ENCODE measurements at regions of chr2 and their contacts with region 1.

Region 1: DNA sequence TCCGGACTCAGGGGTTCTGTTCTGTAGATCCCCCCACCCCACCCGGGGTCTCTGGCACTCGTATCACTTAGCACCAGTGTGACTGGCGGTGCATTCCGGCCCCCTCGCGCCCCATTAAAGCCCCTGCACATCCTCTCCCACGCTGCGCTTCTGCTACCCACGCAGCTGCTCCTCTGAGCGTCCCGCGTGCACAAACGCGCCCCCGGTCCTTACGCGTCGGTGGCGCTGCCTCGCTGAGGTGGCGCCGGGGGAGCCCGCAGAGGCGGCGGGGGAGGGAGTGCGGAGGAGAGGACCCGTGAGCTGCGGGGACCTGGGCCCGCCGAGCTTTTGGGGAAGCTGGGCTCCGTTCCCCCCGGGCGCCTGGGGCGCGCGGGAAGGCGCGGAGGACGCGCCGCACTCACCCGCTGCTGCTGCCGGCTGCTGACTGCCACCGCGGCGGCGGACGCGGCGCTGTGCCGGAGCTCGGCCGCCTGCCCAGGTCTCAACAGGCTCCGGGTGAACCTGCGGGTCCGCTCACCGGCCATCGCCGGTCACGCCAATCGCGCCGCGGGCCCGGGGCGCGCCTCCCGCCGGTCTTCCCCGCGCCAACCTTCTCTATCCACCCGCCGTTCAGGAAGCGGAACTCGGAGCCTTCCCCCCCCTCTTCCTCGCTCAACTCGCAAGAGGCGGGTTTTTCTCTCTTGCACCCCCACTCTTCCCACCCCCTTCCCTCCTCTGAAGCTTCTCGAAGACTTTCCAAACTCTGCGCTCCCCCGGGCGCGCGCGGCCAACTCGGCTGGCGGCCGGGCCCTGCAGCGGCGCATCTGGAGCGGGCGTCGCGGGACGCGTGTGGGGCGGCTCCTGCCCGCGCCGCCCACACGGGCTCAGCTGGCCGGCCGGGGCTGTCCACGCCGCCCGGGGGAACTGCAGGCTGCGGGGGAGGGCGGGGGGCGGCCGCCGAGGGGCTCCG is at the start of gene DOCK10:
- DNase-seq: peak; percentile 35 to 83 (median 54)
- ATAC-seq: peak; percentile 66
- H3K4me3 ChIP-seq: peak within 1 kb of the TSS; percentile 94
- H3K4me3 Mint-ChIP-seq: peak within 1 kb of the TSS; percentile 100
- H3K27ac ChIP-seq: peak within 1 kb of the TSS; percentile 87
- H3K27ac Mint-ChIP-seq: peak within 1 kb of the TSS; percentile 94
- H3K4me1 ChIP-seq: peaks cover 23% of the 10 kb centered on the region
- H3K4me1 Mint-ChIP-seq: peaks cover 60% of the 10 kb centered on the region
- H3K27me3 ChIP-seq: no peaks in the 10 kb centered on the region
- H3K27me3 Mint-ChIP-seq: no peaks in the 10 kb centered on the region
- CTCF ChIP-seq: no peak
- total RNA-seq, gene DOCK10: 184 to 209 TPM

Region 2: GRCh38 chr2:224778474-224778877 is 263.6 kb before region 1 on chr2:
- CTCF ChIA-PET with region 1: no interaction called
- POLR2A ChIA-PET with region 1: no interaction called
- intact Hi-C with region 1: no loop called
- DNase-seq: peak; percentile 23 to 75 (median 50)
- ATAC-seq: peak; percentile 78
- H3K4me3 ChIP-seq: no peak overlapping the region
- H3K4me3 Mint-ChIP-seq: no peak overlapping the region
- H3K27ac ChIP-seq: no peak overlapping the region
- H3K27ac Mint-ChIP-seq: peak overlapping the region; percentile 59
- H3K4me1 ChIP-seq: no peaks in the 10 kb centered on the region
- H3K4me1 Mint-ChIP-seq: peaks cover 8% of the 10 kb centered on the region
- H3K27me3 ChIP-seq: no peaks in the 10 kb centered on the region
- H3K27me3 Mint-ChIP-seq: no peaks in the 10 kb centered on the region
- CTCF ChIP-seq: peak; percentile 97

Region 3: GRCh38 chr2:224946895-224947294 is 95.2 kb before region 1 on chr2:
- CTCF ChIA-PET with region 1: no interaction called
- POLR2A ChIA-PET with region 1: interaction called, 10 read pairs
- intact Hi-C with region 1: no loop called
- DNase-seq: peak in 3 of 14 experiments; percentile 77 to 86 (median 80)
- ATAC-seq: peak; percentile 84
- H3K4me3 ChIP-seq: peak overlapping the region; percentile 52
- H3K4me3 Mint-ChIP-seq: peak overlapping the region; percentile 90
- H3K27ac ChIP-seq: peak overlapping the region; percentile 73 to 86
- H3K27ac Mint-ChIP-seq: peak overlapping the region; percentile 89
- H3K4me1 ChIP-seq: peaks cover 38% of the 10 kb centered on the region
- H3K4me1 Mint-ChIP-seq: peaks cover 81% of the 10 kb centered on the region
- H3K27me3 ChIP-seq: no peaks in the 10 kb centered on the region
- H3K27me3 Mint-ChIP-seq: no peaks in the 10 kb centered on the region
- CTCF ChIP-seq: no peak

Region 4: DNA sequence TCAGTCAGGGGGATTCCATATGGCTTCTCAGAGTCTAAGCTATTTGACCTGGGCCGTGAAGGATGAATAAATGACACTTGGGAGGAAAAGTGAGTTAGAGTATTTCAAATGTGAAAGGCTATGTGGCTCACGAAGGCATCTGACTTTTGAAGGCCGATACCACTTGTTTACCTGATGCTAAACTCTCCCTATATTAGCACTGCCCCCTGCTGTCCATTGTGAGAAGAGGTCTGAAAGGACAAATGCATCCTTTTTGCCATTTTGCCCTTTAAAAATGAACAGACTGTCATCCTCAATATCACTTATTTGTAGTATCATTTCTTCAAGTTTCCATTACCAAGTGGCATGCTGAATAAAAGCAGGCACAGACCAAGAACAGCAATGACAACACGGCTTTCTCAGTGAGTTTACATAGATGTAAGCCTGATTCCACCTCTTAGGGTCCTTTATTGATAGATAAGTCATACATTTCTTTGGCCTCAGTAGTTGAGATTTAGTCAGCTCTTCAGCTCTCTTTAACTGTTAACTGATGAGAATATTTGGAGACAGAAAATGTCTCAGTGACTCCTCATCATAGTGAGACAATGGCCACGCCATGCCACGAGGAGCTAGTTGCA is 40.0 kb before region 1 on chr2:
- CTCF ChIA-PET with region 1: interaction called, 11 read pairs
- POLR2A ChIA-PET with region 1: interaction called, 3 read pairs
- intact Hi-C with region 1: loop called (anchors 5 kb)
- DNase-seq: peak; percentile 24 to 88 (median 52)
- ATAC-seq: peak; percentile 88
- H3K4me3 ChIP-seq: no peak overlapping the region
- H3K4me3 Mint-ChIP-seq: no peak overlapping the region
- H3K27ac ChIP-seq: no peak overlapping the region
- H3K27ac Mint-ChIP-seq: peak overlapping the region; percentile 83
- H3K4me1 ChIP-seq: peaks cover 44% of the 10 kb centered on the region
- H3K4me1 Mint-ChIP-seq: peaks cover 87% of the 10 kb centered on the region
- H3K27me3 ChIP-seq: no peaks in the 10 kb centered on the region
- H3K27me3 Mint-ChIP-seq: no peaks in the 10 kb centered on the region
- CTCF ChIP-seq: peak; percentile 74

Region 5: DNA sequence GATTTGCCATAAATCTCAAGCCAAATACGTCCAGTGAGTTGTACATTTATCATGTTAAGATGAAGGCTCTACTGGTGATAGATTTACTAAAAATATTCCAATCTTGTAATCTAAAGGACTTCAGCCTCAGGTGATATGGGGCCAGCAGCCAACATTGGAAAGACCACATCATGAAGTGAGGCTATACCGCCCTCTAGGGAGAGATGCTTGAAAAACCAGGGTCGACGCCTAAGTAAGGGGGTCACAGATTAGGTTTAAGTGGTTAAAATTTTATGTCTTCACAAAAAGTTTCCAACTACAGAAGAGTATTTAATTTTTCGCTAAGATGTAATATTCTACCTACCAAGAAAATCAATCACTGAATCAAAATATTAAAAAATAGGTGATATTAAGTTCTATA is 33.2 kb before region 1 on chr2:
- CTCF ChIA-PET with region 1: interaction called, 5 read pairs
- POLR2A ChIA-PET with region 1: interaction called, 3 read pairs
- intact Hi-C with region 1: loop called (anchors 5 kb)
- DNase-seq: peak in 2 of 14 experiments; percentile 54
- ATAC-seq: peak; percentile 57
- H3K4me3 ChIP-seq: no peak overlapping the region
- H3K4me3 Mint-ChIP-seq: peak overlapping the region; percentile 26
- H3K27ac ChIP-seq: no peak overlapping the region
- H3K27ac Mint-ChIP-seq: peak overlapping the region; percentile 83
- H3K4me1 ChIP-seq: peaks cover 29% of the 10 kb centered on the region
- H3K4me1 Mint-ChIP-seq: peaks cover 97% of the 10 kb centered on the region
- H3K27me3 ChIP-seq: no peaks in the 10 kb centered on the region
- H3K27me3 Mint-ChIP-seq: no peaks in the 10 kb centered on the region
- CTCF ChIP-seq: peak; percentile 57

Region 6: GRCh38 chr2:225052703-225053102 is 10.6 kb after region 1 on chr2:
- CTCF ChIA-PET with region 1: interaction called, 7 read pairs
- POLR2A ChIA-PET with region 1: interaction called, 96 read pairs
- intact Hi-C with region 1: no loop called
- DNase-seq: peak in 7 of 14 experiments; percentile 18 to 88 (median 53)
- ATAC-seq: peak; percentile 88
- H3K4me3 ChIP-seq: no peak overlapping the region
- H3K4me3 Mint-ChIP-seq: peak overlapping the region; percentile 70
- H3K27ac ChIP-seq: peak overlapping the region in 1 of 2 donors; percentile 37
- H3K27ac Mint-ChIP-seq: peak overlapping the region; percentile 85
- H3K4me1 ChIP-seq: peaks cover 35% of the 10 kb centered on the region
- H3K4me1 Mint-ChIP-seq: peaks cover 74% of the 10 kb centered on the region
- H3K27me3 ChIP-seq: no peaks in the 10 kb centered on the region
- H3K27me3 Mint-ChIP-seq: no peaks in the 10 kb centered on the region
- CTCF ChIP-seq: no peak

Region 7: DNA sequence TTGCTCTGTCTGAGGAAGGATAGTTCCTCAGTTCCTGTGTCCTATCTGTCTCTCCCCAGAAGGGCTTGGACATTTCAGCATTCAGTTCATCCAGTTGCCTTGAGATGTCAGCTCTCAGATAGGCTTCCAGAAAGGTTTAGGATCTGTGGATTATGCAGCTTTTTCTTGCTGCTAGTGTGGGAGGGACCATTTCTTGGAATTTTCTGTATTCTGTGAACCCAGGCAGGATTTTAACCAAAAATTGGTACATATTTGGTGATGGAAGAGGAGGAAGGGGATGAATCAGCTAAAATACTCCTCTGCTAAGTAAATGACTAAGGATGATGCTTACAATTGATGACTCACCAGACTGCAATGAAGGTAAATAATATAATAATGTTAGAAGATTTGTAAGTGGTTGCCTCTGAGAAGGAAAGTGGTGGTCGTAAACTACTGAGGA is 58.8 kb after region 1 on chr2:
- CTCF ChIA-PET with region 1: no interaction called
- POLR2A ChIA-PET with region 1: no interaction called
- intact Hi-C with region 1: loop called in 1 of 2 experiments (anchors 5 kb)
- DNase-seq: no peak
- ATAC-seq: no peak
- H3K4me3 ChIP-seq: no peak overlapping the region
- H3K4me3 Mint-ChIP-seq: no peak overlapping the region
- H3K27ac ChIP-seq: no peak overlapping the region
- H3K27ac Mint-ChIP-seq: no peak overlapping the region
- H3K4me1 ChIP-seq: no peaks in the 10 kb centered on the region
- H3K4me1 Mint-ChIP-seq: no peaks in the 10 kb centered on the region
- H3K27me3 ChIP-seq: no peaks in the 10 kb centered on the region
- H3K27me3 Mint-ChIP-seq: no peaks in the 10 kb centered on the region
- CTCF ChIP-seq: no peak

Region 8: GRCh38 chr2:225156853-225157451 is 114.8 kb after region 1 on chr2:
- CTCF ChIA-PET with region 1: no interaction called
- POLR2A ChIA-PET with region 1: no interaction called
- intact Hi-C with region 1: no loop called
- DNase-seq: no peak
- ATAC-seq: no peak
- H3K4me3 ChIP-seq: no peak overlapping the region
- H3K4me3 Mint-ChIP-seq: no peak overlapping the region
- H3K27ac ChIP-seq: no peak overlapping the region
- H3K27ac Mint-ChIP-seq: no peak overlapping the region
- H3K4me1 ChIP-seq: no peaks in the 10 kb centered on the region
- H3K4me1 Mint-ChIP-seq: no peaks in the 10 kb centered on the region
- H3K27me3 ChIP-seq: no peaks in the 10 kb centered on the region
- H3K27me3 Mint-ChIP-seq: no peaks in the 10 kb centered on the region
- CTCF ChIP-seq: no peak

Measured in CD4-positive, alpha-beta T cell (primary cell).